Caco-2 (cell line): ENCODE measurements at regions of chr2 and their contacts with region 1.

Region 1: DNA sequence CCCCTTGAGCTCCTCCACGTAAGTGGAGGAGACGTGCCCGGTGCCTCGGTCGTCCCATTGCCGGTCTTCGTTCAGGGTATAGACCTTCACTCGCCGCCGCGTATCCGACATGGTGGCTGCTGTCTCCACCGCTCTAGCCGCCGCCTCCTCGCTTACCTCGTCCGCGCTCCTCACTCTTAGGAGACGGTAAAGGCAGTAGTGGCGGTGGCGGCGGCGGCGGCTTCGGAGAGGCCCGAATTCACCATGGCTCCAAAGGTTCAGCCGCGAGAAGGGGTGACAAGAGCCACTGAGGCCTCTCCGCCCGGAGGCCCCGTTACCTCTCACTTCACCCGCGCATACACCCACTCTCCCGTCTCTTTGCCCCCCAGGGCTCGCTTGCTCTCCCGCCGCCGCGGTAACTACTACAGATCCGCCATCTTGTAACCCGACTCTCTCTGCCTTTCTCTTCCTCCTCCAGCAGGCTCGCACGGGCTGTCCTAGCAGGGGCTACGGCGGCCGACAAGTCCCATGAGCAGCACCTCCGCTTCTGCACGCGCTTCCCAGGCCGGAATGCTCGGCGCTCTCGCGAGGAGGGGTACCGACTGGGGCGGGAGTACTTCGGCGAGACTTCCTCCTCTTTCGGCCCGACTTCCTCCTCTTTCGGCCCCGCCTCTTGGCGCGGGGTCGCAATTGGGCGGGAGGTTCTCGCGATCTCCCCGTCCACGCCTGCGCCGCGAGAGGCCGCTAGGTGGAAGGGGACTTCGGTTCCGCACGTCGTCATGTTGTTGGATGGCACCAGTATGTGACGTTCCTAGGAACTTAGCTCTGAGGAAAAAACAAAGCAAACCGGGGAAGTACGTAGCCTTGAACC is at the start of gene PPP4R3B:
- DNase-seq: peak; percentile 100
- H3K4me3 ChIP-seq: peak within 1 kb of the TSS; percentile 99
- H3K4me3 Mint-ChIP-seq: no peak within 1 kb of the TSS
- H3K27ac Mint-ChIP-seq: no peak within 1 kb of the TSS
- H3K4me1 ChIP-seq: no peaks in the 10 kb centered on the region
- H3K4me1 Mint-ChIP-seq: peaks cover 5% of the 10 kb centered on the region
- H3K27me3 ChIP-seq: no peaks in the 10 kb centered on the region
- H3K27me3 Mint-ChIP-seq: no peaks in the 10 kb centered on the region
- CTCF ChIP-seq: peak; percentile 45 to 56
- total RNA-seq, gene PPP4R3B: 54.7 and 63.3 TPM in 2 replicates

Region 2: GRCh38 chr2:55232084-55232862 is 385.1 kb before region 1 on chr2 and contains the starts of genes CLHC1 and RPS27A:
- CTCF ChIA-PET with region 1: no interaction called
- POLR2A ChIA-PET with region 1: no interaction called
- intact Hi-C with region 1: loop called (anchors 5 kb)
- DNase-seq: peak; percentile 93 to 97
- H3K4me3 ChIP-seq: peak within 1 kb of the TSS; percentile 96
- H3K4me3 Mint-ChIP-seq: peak within 1 kb of the TSS; percentile 85
- H3K27ac Mint-ChIP-seq: peak within 1 kb of the TSS; percentile 94
- H3K4me1 ChIP-seq: peaks cover 38% of the 10 kb centered on the region
- H3K4me1 Mint-ChIP-seq: peaks cover 36% of the 10 kb centered on the region
- H3K27me3 ChIP-seq: no peaks in the 10 kb centered on the region
- H3K27me3 Mint-ChIP-seq: no peaks in the 10 kb centered on the region
- CTCF ChIP-seq: no peak
- total RNA-seq, gene CLHC1: 12.6 and 13.4 TPM in 2 replicates
- total RNA-seq, gene RPS27A: 1,305 and 1,418 TPM in 2 replicates

Region 3: DNA sequence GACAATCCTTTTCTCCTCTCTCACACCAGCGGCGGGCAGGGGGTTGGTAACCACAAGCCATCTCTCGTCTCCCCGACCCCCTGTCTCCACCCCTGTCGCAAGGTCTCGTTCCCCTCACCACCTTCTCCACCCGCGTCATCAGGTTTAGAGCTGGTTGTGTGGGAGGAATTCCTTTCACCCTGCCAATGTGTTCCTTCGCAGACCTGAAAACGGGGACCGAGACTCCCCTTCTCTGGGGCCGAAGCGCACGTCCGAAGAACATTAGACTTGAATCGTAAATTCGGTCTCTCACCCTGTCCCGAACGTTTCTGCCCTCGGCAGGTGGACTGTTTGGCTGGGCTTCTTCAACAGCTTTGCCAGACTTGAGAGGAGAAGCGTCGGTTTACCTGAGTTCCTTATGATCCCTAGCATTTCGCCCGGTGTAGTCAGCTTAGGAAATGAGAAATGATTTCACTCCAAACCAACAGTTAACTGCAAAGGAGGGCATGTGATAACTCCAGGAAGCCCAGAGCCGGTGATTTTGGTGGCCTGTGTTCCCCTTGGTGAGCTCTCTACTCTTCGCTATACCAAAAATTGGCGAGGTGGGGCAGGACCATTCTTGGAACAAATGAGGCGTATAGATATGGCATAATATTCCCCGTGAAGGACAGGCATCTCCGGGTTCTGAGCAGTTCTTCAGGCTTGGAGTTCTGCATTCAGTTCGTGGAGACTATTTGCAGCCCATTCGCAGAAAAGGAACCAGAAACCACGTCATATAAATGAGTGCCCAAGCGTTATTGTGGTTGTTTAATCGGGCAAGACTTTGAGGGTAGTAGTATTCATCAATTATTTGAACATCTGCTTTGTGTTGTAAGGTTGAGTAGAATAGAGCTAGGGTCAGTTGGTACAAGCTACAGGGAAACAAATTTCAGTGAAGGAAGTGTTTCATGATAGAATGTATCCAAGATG is 97.2 kb before region 1 on chr2:
- CTCF ChIA-PET with region 1: no interaction called
- POLR2A ChIA-PET with region 1: interaction called, 5 read pairs
- intact Hi-C with region 1: loop called (anchors 1 kb)
- DNase-seq: peak in 1 of 2 experiments; percentile 44
- H3K4me3 ChIP-seq: peak overlapping the region; percentile 65
- H3K4me3 Mint-ChIP-seq: peak overlapping the region; percentile 94
- H3K27ac Mint-ChIP-seq: peak overlapping the region; percentile 88
- H3K4me1 ChIP-seq: no peaks in the 10 kb centered on the region
- H3K4me1 Mint-ChIP-seq: peaks cover 7% of the 10 kb centered on the region
- H3K27me3 ChIP-seq: no peaks in the 10 kb centered on the region
- H3K27me3 Mint-ChIP-seq: no peaks in the 10 kb centered on the region
- CTCF ChIP-seq: no peak

Region 4: GRCh38 chr2:55712477-55713060 is 95.2 kb after region 1 on chr2:
- CTCF ChIA-PET with region 1: no interaction called
- POLR2A ChIA-PET with region 1: interaction called, 7 read pairs
- intact Hi-C with region 1: loop called (anchors 2 kb)
- DNase-seq: peak; percentile 93 to 96
- H3K4me3 ChIP-seq: no peak overlapping the region
- H3K4me3 Mint-ChIP-seq: peak overlapping the region; percentile 45
- H3K27ac Mint-ChIP-seq: peak overlapping the region; percentile 86
- H3K4me1 ChIP-seq: peaks cover 51% of the 10 kb centered on the region
- H3K4me1 Mint-ChIP-seq: peaks cover 55% of the 10 kb centered on the region
- H3K27me3 ChIP-seq: no peaks in the 10 kb centered on the region
- H3K27me3 Mint-ChIP-seq: no peaks in the 10 kb centered on the region
- CTCF ChIP-seq: no peak

Region 5: GRCh38 chr2:56177420-56178220 is 560.2 kb after region 1 on chr2:
- CTCF ChIA-PET with region 1: no interaction called
- POLR2A ChIA-PET with region 1: no interaction called
- intact Hi-C with region 1: no loop called
- DNase-seq: no peak
- H3K4me3 ChIP-seq: no peak overlapping the region
- H3K4me3 Mint-ChIP-seq: no peak overlapping the region
- H3K27ac Mint-ChIP-seq: no peak overlapping the region
- H3K4me1 ChIP-seq: no peaks in the 10 kb centered on the region
- H3K4me1 Mint-ChIP-seq: peaks cover 8% of the 10 kb centered on the region
- H3K27me3 ChIP-seq: no peaks in the 10 kb centered on the region
- H3K27me3 Mint-ChIP-seq: peaks cover 13% of the 10 kb centered on the region
- CTCF ChIP-seq: no peak